ENCODE measurements at regions of chr3 and their contacts with region 1.

Region 1: GRCh38 chr3:133649486-133650068 is 12.2 kb downstream of the TOPBP1 start:
- DNase-seq: no peak
- H3K4me3 ChIP-seq: no peak overlapping the region
- H3K27ac ChIP-seq: no peak overlapping the region
- H3K4me1 ChIP-seq: peaks cover 0 to 3% (median 0%) of the 10 kb centered on the region in 4 donors
- H3K27me3 ChIP-seq: no peaks in the 10 kb centered on the region
- CTCF ChIP-seq: no peak

Region 2: DNA sequence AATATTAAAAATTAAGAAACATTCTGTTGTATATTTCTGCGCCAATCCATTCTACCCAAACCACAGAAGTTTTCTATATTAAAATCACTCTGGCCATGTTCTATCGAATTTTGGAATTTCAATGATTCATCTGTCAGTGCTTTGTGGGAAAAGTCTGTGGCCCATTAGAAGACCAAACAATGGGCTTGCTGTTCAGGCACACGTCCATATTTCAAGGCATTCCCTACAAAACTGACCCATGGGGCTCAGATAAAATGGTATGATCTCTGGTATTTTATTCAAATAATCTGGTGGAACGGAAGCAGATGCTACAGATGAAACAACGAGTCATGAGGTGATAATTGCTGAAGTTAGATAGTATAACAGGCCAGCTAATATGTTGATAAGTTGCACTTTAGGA is 939.8 kb before region 1 on chr3:
- intact Hi-C with region 1: loop called (anchors 10 kb)
- DNase-seq: no peak
- H3K4me3 ChIP-seq: no peak overlapping the region
- H3K27ac ChIP-seq: no peak overlapping the region
- H3K4me1 ChIP-seq: no peaks in the 10 kb centered on the region
- H3K27me3 ChIP-seq: no peaks in the 10 kb centered on the region
- CTCF ChIP-seq: no peak

Region 3: DNA sequence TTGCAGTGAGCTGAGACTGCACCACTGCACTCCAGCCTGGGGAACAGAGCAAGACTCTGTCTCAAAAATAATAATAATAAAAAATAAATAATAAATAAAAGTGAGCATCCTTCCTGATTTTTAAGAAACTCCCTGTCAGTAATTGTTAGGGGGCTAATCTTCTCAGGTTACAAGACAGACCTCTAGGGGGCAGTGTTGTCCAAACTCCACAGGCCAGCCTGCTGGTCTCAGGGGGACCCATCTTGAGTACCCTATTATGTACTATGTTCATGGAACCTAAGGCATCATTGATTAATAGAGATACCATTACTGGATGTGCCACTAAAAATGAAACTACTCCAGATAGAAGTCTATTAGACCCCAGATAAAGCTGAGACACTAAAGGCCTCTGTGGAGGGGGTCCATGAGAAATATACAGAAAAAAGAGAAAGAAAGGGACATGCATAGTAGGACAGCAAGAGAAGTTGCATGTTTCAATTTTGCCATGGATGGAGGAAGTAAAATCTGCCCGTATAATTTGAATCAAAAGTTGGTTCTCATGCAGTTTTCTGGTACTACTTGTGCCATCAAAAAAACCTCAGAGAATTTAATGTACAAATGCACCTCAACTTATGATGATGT is 161.5 kb before region 1 on chr3:
- intact Hi-C with region 1: no loop called
- DNase-seq: no peak
- H3K4me3 ChIP-seq: no peak overlapping the region
- H3K27ac ChIP-seq: no peak overlapping the region
- H3K4me1 ChIP-seq: no peaks in the 10 kb centered on the region
- H3K27me3 ChIP-seq: no peaks in the 10 kb centered on the region
- CTCF ChIP-seq: peak; percentile 38 to 50

Region 4: DNA sequence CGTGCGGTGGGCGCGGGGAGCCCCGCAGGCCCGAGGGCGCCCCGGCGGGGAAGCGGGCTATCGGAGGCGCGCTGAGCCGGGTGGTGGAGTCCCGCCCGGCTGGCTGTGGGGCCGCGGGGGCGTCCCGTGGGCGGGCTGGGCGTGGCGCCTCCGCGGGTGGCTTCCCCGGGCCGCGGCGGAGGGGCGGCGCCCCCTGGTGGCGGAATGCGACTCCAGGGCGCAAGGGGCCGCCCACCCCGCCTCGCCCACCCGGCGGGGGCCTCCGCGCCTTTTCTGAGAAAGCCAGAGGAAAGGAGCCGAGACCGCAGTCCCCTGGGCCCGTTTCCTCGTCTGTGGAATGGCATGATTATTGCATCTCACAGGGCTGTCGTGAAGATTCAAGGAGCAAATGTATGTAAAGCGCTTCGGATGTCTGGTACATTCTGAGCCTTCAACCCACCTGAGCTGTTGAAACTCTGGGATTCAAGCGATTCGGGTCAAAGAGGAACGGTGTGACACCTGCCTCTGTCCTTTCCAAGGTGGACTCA is 278.0 kb after region 1 on chr3:
- intact Hi-C with region 1: no loop called
- DNase-seq: peak in 1 of 2 donors; percentile 69
- H3K4me3 ChIP-seq: peak overlapping the region; percentile 52 to 66
- H3K27ac ChIP-seq: no peak overlapping the region
- H3K4me1 ChIP-seq: peaks cover 0 to 16% (median 10%) of the 10 kb centered on the region in 4 donors
- H3K27me3 ChIP-seq: peaks cover 0 to 3% of the 10 kb centered on the region in 2 donors
- CTCF ChIP-seq: peak; percentile 70 to 83

Region 5: DNA sequence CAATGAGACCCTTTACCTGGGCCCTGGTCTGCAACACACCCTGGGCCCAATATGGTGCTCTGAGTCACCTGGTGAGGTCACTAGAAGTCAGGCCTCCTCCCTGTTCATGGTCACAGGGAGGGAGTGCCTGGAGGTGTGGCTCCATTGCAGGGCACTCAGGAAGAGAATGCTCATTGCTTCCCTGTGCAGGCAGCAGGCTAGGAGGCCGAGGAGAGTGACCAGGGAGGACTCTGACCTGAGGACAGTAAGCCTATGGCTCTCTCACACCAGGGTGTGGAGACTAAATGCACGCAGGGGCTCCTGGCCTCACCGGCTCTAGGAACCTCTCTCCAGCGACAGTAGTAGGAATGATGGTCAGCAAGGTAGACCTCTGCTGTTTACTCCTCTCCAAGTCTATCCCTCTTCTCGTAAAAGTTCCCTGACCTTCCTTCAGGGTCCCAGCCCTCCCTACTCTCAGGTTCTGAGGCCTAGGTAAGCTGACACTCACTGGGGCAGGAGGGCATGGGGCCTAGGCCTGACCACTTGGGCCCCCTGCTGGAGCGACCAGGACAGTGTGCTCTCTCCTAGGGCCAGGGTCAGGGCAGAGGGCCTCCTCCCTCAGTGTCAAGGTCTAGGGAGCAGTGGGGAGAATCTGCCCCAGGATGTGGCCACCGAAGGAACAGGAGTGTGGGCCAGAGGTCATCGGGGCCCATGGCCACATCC is 389.7 kb after region 1 on chr3:
- intact Hi-C with region 1: no loop called
- DNase-seq: no peak
- H3K4me3 ChIP-seq: no peak overlapping the region
- H3K27ac ChIP-seq: no peak overlapping the region
- H3K4me1 ChIP-seq: no peaks in the 10 kb centered on the region
- H3K27me3 ChIP-seq: no peaks in the 10 kb centered on the region
- CTCF ChIP-seq: no peak

Region 6: DNA sequence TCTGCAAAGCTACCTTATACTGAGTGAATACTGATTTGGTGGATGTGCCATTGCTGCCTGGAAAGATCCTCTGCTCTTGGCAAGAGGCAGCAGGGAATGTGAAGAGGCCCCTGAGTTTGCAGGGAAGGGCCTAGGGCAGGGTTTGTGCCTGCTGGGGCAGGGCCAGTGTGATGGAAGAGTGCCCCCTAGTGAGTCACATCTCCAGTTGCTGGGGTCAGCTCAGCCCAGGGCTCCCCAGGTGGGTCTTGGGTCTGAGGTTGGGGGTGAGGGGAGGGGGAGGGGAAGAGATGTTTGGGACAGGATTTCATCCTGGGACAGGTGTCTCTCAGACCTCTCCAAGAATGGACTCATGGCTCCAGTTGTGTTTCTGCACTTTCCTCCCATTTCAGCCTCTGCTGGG is 728.8 kb after region 1 on chr3:
- intact Hi-C with region 1: no loop called
- DNase-seq: peak in 1 of 2 donors; percentile 68
- H3K4me3 ChIP-seq: no peak overlapping the region
- H3K27ac ChIP-seq: no peak overlapping the region
- H3K4me1 ChIP-seq: peaks cover 0 to 22% (median 13%) of the 10 kb centered on the region in 4 donors
- H3K27me3 ChIP-seq: no peaks in the 10 kb centered on the region
- CTCF ChIP-seq: peak in 1 of 2 experiments; percentile 29

Measured in tibial artery (tissue), 4 donors.